ENCODE measurements at regions of chr5 and their contacts with region 1.

Region 1: GRCh38 chr5:150789943-150790611 is 11.5 kb downstream of the SMIM3 start:
- DNase-seq: no peak
- H3K4me3 ChIP-seq: peak overlapping the region in 1 of 2 experiments; percentile 43; a peak in 3 of 4 replicates
- H3K27ac ChIP-seq: peak overlapping the region; percentile 76 to 94
- H3K4me1 ChIP-seq: peaks cover 14 to 46% of the 10 kb centered on the region in 2 experiments
- H3K27me3 ChIP-seq: no peaks in the 10 kb centered on the region
- CTCF ChIP-seq: no peak
- EP300 ChIP-seq: peak; percentile 47 to 90; a peak in 3 of 4 replicates
- RAD21 ChIP-seq: no peak

Region 2: GRCh38 chr5:150321816-150322557 is 468.1 kb before region 1 on chr5:
- CTCF ChIA-PET with region 1: no interaction called
- POLR2A ChIA-PET with region 1: no interaction called
- DNase-seq: no peak
- H3K4me3 ChIP-seq: no peak overlapping the region
- H3K27ac ChIP-seq: peak overlapping the region in 1 of 2 experiments; percentile 23; a peak in 2 of 4 replicates
- H3K4me1 ChIP-seq: peaks cover 22 to 27% of the 10 kb centered on the region in 2 experiments
- H3K27me3 ChIP-seq: no peaks in the 10 kb centered on the region
- CTCF ChIP-seq: no peak
- EP300 ChIP-seq: no peak
- RAD21 ChIP-seq: no peak

Region 3: GRCh38 chr5:150376799-150377771 is 413.0 kb before region 1 on chr5:
- CTCF ChIA-PET with region 1: no interaction called
- POLR2A ChIA-PET with region 1: no interaction called
- DNase-seq: no peak
- H3K4me3 ChIP-seq: no peak overlapping the region
- H3K27ac ChIP-seq: peak overlapping the region; percentile 88 to 99
- H3K4me1 ChIP-seq: peaks cover 21 to 28% of the 10 kb centered on the region in 2 experiments; a peak in 3 of 4 replicates
- H3K27me3 ChIP-seq: no peaks in the 10 kb centered on the region
- CTCF ChIP-seq: no peak
- EP300 ChIP-seq: no peak
- RAD21 ChIP-seq: no peak

Region 4: DNA sequence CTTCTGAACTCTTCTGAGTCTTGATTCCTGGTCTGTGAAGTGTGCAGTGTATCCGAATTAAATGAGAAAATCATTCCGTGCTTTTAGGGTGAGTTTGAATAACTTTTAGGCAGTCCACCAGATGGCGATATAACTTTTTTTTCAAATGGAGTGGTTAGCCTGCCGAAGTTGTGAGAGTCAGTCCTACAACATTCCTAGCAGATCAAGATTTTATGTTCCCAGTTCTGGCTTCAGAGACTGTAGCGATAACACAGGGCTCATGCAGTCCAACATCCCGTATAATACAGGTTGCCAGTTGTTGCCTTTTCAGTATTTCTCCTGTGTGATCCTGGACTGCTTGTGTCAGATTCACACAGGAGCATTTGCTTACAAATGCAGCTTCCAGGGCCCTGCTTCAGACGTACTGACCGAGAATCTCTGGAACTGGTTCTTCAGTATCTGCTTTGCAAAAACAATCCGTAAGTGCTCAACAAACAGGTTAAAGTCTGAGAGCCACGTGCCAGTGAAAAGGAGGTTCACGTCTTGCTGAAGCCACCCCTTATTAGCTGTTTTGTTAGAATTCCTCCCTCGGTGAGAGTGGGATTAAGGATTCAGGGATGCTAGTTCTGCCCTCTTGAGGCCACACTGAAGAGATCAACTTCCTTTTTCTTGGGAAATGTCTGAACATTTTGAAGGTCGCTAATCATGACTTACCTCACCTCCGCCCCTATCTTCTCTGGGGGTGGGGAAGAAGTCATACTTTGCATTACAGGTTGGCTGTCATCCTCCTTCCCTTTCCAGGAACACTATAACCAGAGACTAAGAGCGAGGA is 11.2 kb after region 1 on chr5:
- CTCF ChIA-PET with region 1: interaction called, 11 read pairs
- POLR2A ChIA-PET with region 1: no interaction called
- DNase-seq: peak; percentile 36
- H3K4me3 ChIP-seq: peak overlapping the region; percentile 31 to 46; a peak in 3 of 4 replicates
- H3K27ac ChIP-seq: no peak overlapping the region; a peak in 1 of 4 replicates
- H3K4me1 ChIP-seq: no peaks in the 10 kb centered on the region; a peak in 1 of 4 replicates
- H3K27me3 ChIP-seq: no peaks in the 10 kb centered on the region
- CTCF ChIP-seq: peak; percentile 49
- EP300 ChIP-seq: no peak
- RAD21 ChIP-seq: peak; percentile 51

Region 5: GRCh38 chr5:150960791-150961396 is 170.8 kb after region 1 on chr5:
- CTCF ChIA-PET with region 1: no interaction called
- POLR2A ChIA-PET with region 1: no interaction called
- DNase-seq: no peak
- H3K4me3 ChIP-seq: no peak overlapping the region
- H3K27ac ChIP-seq: no peak overlapping the region
- H3K4me1 ChIP-seq: no peaks in the 10 kb centered on the region
- H3K27me3 ChIP-seq: no peaks in the 10 kb centered on the region
- CTCF ChIP-seq: no peak
- EP300 ChIP-seq: no peak
- RAD21 ChIP-seq: no peak